Activated B cell treated with CpG ODN at 0.5 μM for 24 hours (primary cell): ENCODE measurements at regions of chr12 and their contacts with region 1.

Region 1: GRCh38 chr12:76176940-76177339 is 92.5 kb upstream of the NAP1L1 start:
- DNase-seq: no peak
- ATAC-seq: no peak
- H3K4me3 Mint-ChIP-seq: no peak overlapping the region
- H3K27ac Mint-ChIP-seq: no peak overlapping the region
- H3K4me1 Mint-ChIP-seq: peaks cover 21% of the 10 kb centered on the region
- H3K27me3 Mint-ChIP-seq: no peaks in the 10 kb centered on the region
- CTCF ChIP-seq: no peak

Region 2: GRCh38 chr12:76055393-76055792 is 121.5 kb before region 1 on chr12:
- CTCF ChIA-PET with region 1: no interaction called
- POLR2A ChIA-PET with region 1: no interaction called
- intact Hi-C with region 1: no loop called
- DNase-seq: no peak
- ATAC-seq: no peak
- H3K4me3 Mint-ChIP-seq: no peak overlapping the region
- H3K27ac Mint-ChIP-seq: no peak overlapping the region
- H3K4me1 Mint-ChIP-seq: peaks cover under 1% of the 10 kb centered on the region
- H3K27me3 Mint-ChIP-seq: no peaks in the 10 kb centered on the region
- CTCF ChIP-seq: no peak

Region 3: GRCh38 chr12:76216585-76217472 is 39.9 kb after region 1 on chr12:
- CTCF ChIA-PET with region 1: no interaction called
- POLR2A ChIA-PET with region 1: interaction called, 15 read pairs
- intact Hi-C with region 1: no loop called
- DNase-seq: no peak
- ATAC-seq: no peak
- H3K4me3 Mint-ChIP-seq: no peak overlapping the region
- H3K27ac Mint-ChIP-seq: no peak overlapping the region
- H3K4me1 Mint-ChIP-seq: no peaks in the 10 kb centered on the region
- H3K27me3 Mint-ChIP-seq: peaks cover 1% of the 10 kb centered on the region
- CTCF ChIP-seq: no peak

Region 4: GRCh38 chr12:76266797-76267196 is 89.9 kb after region 1 on chr12:
- CTCF ChIA-PET with region 1: no interaction called
- POLR2A ChIA-PET with region 1: no interaction called
- intact Hi-C with region 1: no loop called
- DNase-seq: no peak
- ATAC-seq: no peak
- H3K4me3 Mint-ChIP-seq: no peak overlapping the region
- H3K27ac Mint-ChIP-seq: no peak overlapping the region
- H3K4me1 Mint-ChIP-seq: no peaks in the 10 kb centered on the region
- H3K27me3 Mint-ChIP-seq: peaks cover 16% of the 10 kb centered on the region
- CTCF ChIP-seq: no peak